A549 (cell line): ENCODE measurements at regions of chr16 and their contacts with region 1.

Region 1: GRCh38 chr16:3059000-3059722 is 6.3 kb upstream of the IL32 start:
- DNase-seq: peak; percentile 79 to 84
- ATAC-seq: peak; percentile 89 to 95
- H3K4me3 ChIP-seq: peak overlapping the region; percentile 76
- H3K27ac ChIP-seq: peak overlapping the region; percentile 94 to 99
- H3K4me1 ChIP-seq: peaks cover 10% of the 10 kb centered on the region
- CTCF ChIP-seq: peak; percentile 82
- EP300 ChIP-seq: no peak
- POLR2A ChIP-seq: peak; percentile 53
- RAD21 ChIP-seq: peak; percentile 74 to 94

Region 2: GRCh38 chr16:3038256-3038655 is 20.9 kb before region 1 on chr16:
- CTCF ChIA-PET with region 1: interaction called, 46 read pairs
- POLR2A ChIA-PET with region 1: interaction called, 3 read pairs
- DNase-seq: no peak
- ATAC-seq: peak in 1 of 2 experiments; percentile 1; a peak in 1 of 6 replicates
- H3K4me3 ChIP-seq: no peak overlapping the region
- H3K27ac ChIP-seq: no peak overlapping the region
- H3K4me1 ChIP-seq: 0 out of 3 replicates have a peak, but pooled peaks cover 4% of the 10 kb centered on the region
- CTCF ChIP-seq: no peak
- EP300 ChIP-seq: no peak
- POLR2A ChIP-seq: no peak
- RAD21 ChIP-seq: no peak

Region 3: GRCh38 chr16:3074860-3075522 is 15.8 kb after region 1 on chr16:
- CTCF ChIA-PET with region 1: interaction called, 29 read pairs
- POLR2A ChIA-PET with region 1: interaction called, 3 read pairs
- DNase-seq: no peak
- ATAC-seq: no peak
- H3K4me3 ChIP-seq: no peak overlapping the region
- H3K27ac ChIP-seq: no peak overlapping the region
- H3K4me1 ChIP-seq: no peaks in the 10 kb centered on the region
- CTCF ChIP-seq: no peak
- EP300 ChIP-seq: no peak
- POLR2A ChIP-seq: no peak
- RAD21 ChIP-seq: no peak

Region 4: DNA sequence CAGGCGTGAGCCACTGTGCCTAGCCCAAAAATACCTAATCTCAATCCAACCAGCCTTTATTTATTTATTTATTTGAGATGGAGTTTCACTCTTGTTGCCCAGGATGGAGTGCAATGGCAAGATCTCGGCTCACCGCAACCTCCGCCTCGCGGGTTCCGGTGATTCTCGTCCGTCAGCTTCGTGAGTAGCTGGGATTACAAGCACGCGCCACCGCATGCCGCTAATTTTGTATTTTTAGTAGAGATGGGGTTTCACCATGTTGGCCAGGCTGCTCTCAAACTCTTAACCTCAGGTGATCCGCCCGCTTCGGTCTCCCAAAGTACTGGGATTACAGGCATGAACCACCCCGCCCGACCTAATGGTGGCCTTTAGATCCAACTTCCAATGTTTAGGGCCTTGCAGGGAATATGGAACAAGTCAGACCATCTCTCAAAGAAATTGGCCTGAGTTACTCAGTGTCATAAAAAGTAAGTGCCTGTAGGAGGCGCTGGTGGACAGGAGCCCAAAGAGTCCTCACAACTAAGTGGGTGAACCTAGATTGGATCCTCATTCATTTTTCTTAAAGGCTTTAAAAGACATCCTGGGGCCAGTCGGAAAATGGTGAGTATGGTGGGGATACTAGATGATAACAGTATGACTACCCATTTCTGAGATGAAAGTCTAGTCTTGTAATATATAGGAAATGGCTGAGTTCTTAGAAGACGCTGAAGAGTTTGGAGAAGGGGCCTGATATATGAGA is 35.3 kb after region 1 on chr16:
- CTCF ChIA-PET with region 1: interaction called, 124 read pairs
- POLR2A ChIA-PET with region 1: no interaction called
- DNase-seq: peak in 1 of 2 experiments; percentile 69
- ATAC-seq: peak in 1 of 2 experiments; percentile 45; a peak in 3 of 6 replicates
- H3K4me3 ChIP-seq: no peak overlapping the region
- H3K27ac ChIP-seq: no peak overlapping the region
- H3K4me1 ChIP-seq: peaks cover 8% of the 10 kb centered on the region; the same call in 2 of the 3 replicates
- CTCF ChIP-seq: peak; percentile 46
- EP300 ChIP-seq: no peak
- POLR2A ChIP-seq: no peak
- RAD21 ChIP-seq: peak in 1 of 2 experiments; percentile 38; a peak in 2 of 5 replicates

Region 5: DNA sequence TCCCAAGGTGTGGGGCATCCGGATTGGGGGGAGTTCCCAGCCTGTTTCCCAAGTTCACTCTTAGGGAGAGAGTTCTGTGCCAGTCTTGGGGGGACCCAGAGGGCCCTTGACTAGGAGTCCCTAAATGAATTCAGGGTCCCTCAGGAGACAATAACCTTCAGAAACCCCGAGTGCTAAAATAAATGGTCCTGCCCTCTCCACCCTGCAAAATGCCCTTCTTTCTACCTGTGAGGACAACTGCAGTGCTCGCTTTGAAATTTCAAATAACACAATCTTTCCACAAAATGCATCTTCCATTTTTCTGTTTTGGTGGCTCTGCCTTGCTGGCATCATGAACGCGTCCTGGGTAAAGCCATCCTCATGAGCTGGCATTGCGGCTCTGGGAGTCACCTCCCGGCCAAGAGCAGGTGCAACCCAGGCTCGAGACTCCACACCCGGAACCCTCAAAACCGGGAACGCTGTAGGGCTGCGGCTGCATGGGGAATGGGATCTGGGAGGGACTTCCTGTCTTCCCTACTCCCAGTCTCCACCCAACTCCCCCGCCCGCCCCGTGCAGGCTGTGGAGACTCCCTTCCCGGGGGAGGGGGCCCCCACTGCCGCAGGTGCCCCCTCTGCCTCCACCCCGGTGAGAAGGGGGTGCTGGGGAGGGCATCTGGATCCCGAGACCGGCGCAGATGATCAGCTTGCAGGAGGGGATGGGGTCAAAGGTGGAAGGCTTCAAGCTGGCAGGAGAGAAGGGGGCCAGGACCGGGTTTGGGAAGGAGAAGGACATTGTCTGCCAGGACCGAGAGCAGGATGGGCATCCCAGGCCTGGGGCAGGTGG is 53.1 kb after region 1 on chr16 and contains the start of gene ZNF205:
- CTCF ChIA-PET with region 1: interaction called, 45 read pairs
- POLR2A ChIA-PET with region 1: no interaction called
- DNase-seq: peak; percentile 85 to 94
- ATAC-seq: peak; percentile 95 to 98
- H3K4me3 ChIP-seq: peak within 1 kb of the TSS; percentile 84
- H3K27ac ChIP-seq: peak within 1 kb of the TSS; percentile 90 to 96
- H3K4me1 ChIP-seq: peaks cover 18% of the 10 kb centered on the region
- CTCF ChIP-seq: no peak
- EP300 ChIP-seq: no peak
- POLR2A ChIP-seq: peak; percentile 39; the same call in 1 of the 2 replicates
- RAD21 ChIP-seq: no peak
- polyA plus RNA-seq, gene ZNF205: 3.1 and 4.3 TPM in 2 replicates

Region 6: GRCh38 chr16:3150346-3151218 is 91.4 kb after region 1 on chr16:
- CTCF ChIA-PET with region 1: interaction called, 18 read pairs
- POLR2A ChIA-PET with region 1: no interaction called
- DNase-seq: peak; percentile 86 to 97
- ATAC-seq: peak; percentile 69 to 83
- H3K4me3 ChIP-seq: peak overlapping the region; percentile 76
- H3K27ac ChIP-seq: peak overlapping the region; percentile 95 to 97
- H3K4me1 ChIP-seq: peaks cover 7% of the 10 kb centered on the region
- CTCF ChIP-seq: no peak
- EP300 ChIP-seq: no peak
- POLR2A ChIP-seq: no peak
- RAD21 ChIP-seq: no peak